Prostate gland (tissue), 2 donors: ENCODE measurements at regions of chrX and their contacts with region 1.

Region 1: GRCh38 chrX:68828740-68829552 is at the start of gene EFNB1:
- DNase-seq: peak; percentile 92
- H3K4me3 ChIP-seq: peak within 1 kb of the TSS; percentile 57 to 58
- H3K27ac ChIP-seq: peak within 1 kb of the TSS; percentile 70 to 73
- H3K4me1 ChIP-seq: no peaks in the 10 kb centered on the region
- H3K27me3 ChIP-seq: no peaks in the 10 kb centered on the region
- CTCF ChIP-seq: peak in 1 of 4 experiments; percentile 16
- POLR2A ChIP-seq: peak; percentile 98
- total RNA-seq, gene EFNB1: 19.9 to 40.1 TPM

Region 2: DNA sequence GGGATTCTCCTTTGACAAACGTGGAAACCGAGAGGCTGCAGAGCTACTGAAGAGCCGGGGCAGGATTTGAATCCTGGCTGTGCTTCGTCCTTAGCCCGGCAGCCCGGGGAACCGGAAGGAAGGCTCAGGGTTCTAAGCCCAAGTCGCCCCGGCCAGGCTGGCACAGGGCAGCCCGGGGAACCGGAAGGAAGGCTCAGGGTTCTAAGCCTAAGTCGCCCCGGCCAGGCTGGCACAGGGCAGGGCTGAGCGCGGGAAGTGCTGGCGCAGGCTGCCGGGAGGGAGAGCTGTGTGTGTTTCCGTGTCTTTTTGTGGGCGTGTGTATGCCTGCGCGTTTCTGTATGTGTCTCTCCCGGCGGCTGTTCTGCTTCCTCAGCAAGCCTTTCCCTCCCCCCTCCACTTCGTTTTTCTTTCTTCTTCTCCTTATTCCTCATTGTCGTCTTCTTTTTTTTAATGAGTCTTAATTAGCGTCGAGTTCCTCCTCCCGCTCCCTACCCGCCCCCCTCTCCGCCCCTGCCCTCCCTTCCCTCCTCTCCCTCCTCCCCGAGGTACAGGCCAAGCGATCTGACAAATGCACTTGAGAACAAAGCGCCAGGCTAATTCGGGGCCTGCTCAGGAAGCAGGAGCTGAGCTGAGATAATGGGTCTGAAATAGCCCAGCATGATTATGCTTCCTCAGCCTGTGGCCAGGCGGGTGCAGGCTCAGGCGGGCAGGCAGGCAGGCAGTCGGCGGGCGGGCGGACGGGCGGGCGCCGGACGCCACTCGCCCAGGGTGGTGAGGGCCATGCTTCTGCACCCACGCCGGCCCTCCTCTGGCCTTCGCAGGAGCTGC is 65.8 kb after region 1 on chrX:
- intact Hi-C with region 1: loop called (anchors 2 kb)
- DNase-seq: peak; percentile 42
- H3K4me3 ChIP-seq: no peak overlapping the region
- H3K27ac ChIP-seq: peak overlapping the region; percentile 67 to 69
- H3K4me1 ChIP-seq: no peaks in the 10 kb centered on the region
- H3K27me3 ChIP-seq: no peaks in the 10 kb centered on the region
- CTCF ChIP-seq: no peak
- POLR2A ChIP-seq: no peak

Region 3: GRCh38 chrX:68989865-68990606 is 161.1 kb after region 1 on chrX:
- intact Hi-C with region 1: loop called (anchors 10 kb)
- DNase-seq: no peak
- H3K4me3 ChIP-seq: no peak overlapping the region
- H3K27ac ChIP-seq: no peak overlapping the region
- H3K4me1 ChIP-seq: no peaks in the 10 kb centered on the region
- H3K27me3 ChIP-seq: no peaks in the 10 kb centered on the region
- CTCF ChIP-seq: no peak
- POLR2A ChIP-seq: no peak

Region 4: DNA sequence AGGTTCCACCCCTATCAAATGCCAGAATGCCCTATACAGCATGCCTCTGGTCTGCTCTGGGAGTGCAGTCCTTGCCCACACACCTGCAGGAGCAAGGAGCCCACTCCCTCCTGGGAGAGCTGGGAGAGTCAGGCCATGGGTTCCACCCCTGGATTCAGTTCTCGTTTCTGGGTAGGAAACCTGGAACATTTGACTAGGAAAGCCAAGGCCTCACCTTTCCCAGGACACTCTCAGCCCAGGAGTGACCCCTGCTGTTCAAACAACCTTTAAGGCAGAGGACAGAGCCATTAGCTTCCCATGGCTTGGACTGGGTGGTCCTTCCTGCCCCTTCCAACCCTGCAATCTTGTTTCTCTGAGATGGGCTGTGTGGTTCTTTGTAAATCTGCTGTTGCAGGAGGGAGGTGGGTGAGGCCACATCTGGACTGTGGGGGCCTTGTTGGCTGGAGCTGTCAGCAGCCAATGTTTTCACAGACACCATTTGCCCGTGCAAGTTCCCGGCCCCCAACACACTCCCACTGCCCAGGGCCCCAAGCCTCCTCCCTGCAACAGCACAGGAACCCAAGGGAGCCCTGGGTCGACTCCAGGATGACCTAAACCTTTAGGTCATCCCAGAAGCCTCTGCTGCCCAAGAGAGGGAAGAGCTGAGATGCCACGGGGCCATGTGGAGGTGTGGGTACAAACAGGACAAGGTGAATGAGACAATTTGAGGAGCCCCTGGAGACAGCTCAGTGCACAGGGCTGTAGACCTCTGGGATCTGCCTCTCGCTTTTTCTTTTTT is 231.9 kb after region 1 on chrX:
- intact Hi-C with region 1: loop called (anchors 1 kb)
- DNase-seq: peak; percentile 18
- H3K4me3 ChIP-seq: no peak overlapping the region
- H3K27ac ChIP-seq: no peak overlapping the region
- H3K4me1 ChIP-seq: no peaks in the 10 kb centered on the region
- H3K27me3 ChIP-seq: no peaks in the 10 kb centered on the region
- CTCF ChIP-seq: peak in 3 of 4 experiments; percentile 30 to 46 (median 41)
- POLR2A ChIP-seq: no peak

Region 5: GRCh38 chrX:69158166-69158980 is 329.4 kb after region 1 on chrX:
- intact Hi-C with region 1: loop called (anchors 10 kb)
- DNase-seq: peak; percentile 17
- H3K4me3 ChIP-seq: no peak overlapping the region
- H3K27ac ChIP-seq: no peak overlapping the region
- H3K4me1 ChIP-seq: no peaks in the 10 kb centered on the region
- H3K27me3 ChIP-seq: no peaks in the 10 kb centered on the region
- CTCF ChIP-seq: peak in 2 of 4 experiments; percentile 30 to 35
- POLR2A ChIP-seq: no peak

Region 6: DNA sequence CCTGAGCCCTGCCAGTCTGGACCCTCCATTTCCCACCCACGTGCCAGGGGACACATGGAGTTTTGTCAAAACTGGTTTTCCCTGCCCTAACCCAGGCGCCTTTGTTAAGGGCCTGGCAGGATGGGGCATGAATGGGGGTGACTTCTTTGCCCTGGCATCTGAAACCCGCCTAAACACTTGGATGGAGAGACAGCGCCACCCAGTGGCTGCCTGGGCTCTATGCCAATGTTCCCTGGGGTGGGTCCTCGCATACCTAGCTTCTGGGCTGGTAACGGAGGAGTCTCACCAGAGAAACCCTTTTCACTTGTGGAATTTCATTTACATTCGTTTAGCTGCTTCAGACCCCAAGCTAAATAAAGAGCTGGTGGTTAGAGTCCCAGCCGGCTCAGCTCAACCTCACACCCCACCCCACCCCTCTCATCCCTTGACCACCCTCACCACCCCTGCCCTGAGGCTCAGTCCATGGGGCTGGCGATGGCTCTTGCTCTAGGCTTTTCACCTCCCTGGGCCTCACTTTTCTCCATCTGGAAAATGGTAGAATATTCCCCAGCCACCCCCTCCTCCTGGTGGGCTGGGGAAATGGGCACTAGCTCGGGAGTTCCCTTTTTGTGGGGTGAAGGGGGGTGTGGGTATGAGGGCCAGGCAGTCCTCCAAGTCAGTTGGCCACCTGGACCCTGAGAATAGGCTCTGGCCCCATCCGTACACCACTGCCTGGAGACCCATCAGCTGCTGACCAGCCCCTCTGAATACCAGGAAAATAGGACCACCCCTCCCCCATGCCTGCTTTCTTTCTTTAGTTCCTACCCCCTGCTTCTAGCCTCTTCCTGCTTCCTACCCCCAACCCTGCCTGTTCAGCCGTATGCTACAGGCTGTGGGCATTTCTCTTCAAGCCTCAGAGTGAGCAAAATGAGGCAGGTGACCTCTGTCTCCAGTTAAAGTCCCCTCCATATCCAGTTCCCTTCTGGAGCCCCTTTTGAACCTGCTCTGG is 393.5 kb after region 1 on chrX:
- intact Hi-C with region 1: loop called (anchors 2 kb)
- DNase-seq: peak; percentile 54
- H3K4me3 ChIP-seq: no peak overlapping the region
- H3K27ac ChIP-seq: no peak overlapping the region
- H3K4me1 ChIP-seq: no peaks in the 10 kb centered on the region
- H3K27me3 ChIP-seq: no peaks in the 10 kb centered on the region
- CTCF ChIP-seq: peak; percentile 49 to 76 (median 70)
- POLR2A ChIP-seq: no peak

Region 7: GRCh38 chrX:69285881-69286564 is 457.1 kb after region 1 on chrX:
- intact Hi-C with region 1: loop called (anchors 2 kb)
- DNase-seq: peak; percentile 32
- H3K4me3 ChIP-seq: peak overlapping the region; percentile 16 to 21
- H3K27ac ChIP-seq: peak overlapping the region; percentile 49 to 62
- H3K4me1 ChIP-seq: no peaks in the 10 kb centered on the region
- H3K27me3 ChIP-seq: no peaks in the 10 kb centered on the region
- CTCF ChIP-seq: peak; percentile 36 to 80 (median 75)
- POLR2A ChIP-seq: no peak